H1 (cell line): ENCODE measurements at regions of chr17 and their contacts with region 1.

Region 1: DNA sequence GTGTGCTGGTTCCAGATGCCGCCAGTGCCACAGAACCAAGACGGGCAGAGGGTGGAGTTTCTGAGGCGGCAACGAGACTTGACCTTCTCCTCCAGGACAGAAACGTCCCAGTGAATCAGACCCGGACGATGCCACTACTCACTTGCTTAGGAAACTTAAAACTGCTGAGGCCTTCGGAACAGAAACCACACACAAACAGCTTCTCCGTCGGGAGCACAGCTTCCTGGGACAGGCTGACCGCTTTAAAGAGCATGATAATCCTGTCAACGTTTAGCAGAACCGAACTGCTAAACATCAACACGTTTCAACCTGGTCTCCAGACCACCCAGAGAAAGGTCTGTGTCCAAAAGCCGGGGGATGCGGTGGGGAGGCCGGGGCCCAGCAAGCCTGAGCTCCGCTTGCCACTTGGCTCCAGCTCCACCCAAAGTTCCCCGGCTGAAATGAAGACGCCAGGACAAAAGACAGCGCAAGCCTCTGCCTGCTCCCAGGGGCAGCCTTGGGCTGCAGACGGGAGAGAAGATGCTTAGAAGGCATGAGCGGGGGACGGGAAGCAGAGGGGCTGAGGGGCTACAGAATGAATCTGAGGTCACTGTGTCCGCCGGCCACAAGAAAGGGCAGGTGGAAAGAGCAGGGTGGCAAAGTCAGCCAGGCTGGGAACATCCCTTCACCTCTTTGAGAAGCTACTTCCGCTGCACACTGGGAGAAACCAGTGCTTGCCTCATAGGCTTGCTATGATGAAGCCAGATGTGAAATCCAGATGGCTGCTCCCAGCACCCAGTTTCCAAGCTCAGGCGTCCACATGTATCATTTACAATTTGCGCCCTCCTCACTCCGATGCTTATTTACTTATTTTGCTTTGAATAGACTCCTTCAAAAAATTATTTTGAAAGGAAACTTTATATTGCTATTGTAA is 69.0 kb downstream of the MRM3 start:
- DNase-seq: no peak
- H3K4me3 ChIP-seq: no peak overlapping the region
- H3K27ac ChIP-seq: no peak overlapping the region
- H3K4me1 ChIP-seq: peaks cover 0 to 17% (median 6%) of the 10 kb centered on the region in 4 experiments; a peak in 5 of 7 replicates
- H3K27me3 ChIP-seq: no peaks in the 10 kb centered on the region; a peak in 1 of 7 replicates
- CTCF ChIP-seq: no peak
- EP300 ChIP-seq: no peak
- POLR2A ChIP-seq: no peak
- RAD21 ChIP-seq: no peak

Region 2: DNA sequence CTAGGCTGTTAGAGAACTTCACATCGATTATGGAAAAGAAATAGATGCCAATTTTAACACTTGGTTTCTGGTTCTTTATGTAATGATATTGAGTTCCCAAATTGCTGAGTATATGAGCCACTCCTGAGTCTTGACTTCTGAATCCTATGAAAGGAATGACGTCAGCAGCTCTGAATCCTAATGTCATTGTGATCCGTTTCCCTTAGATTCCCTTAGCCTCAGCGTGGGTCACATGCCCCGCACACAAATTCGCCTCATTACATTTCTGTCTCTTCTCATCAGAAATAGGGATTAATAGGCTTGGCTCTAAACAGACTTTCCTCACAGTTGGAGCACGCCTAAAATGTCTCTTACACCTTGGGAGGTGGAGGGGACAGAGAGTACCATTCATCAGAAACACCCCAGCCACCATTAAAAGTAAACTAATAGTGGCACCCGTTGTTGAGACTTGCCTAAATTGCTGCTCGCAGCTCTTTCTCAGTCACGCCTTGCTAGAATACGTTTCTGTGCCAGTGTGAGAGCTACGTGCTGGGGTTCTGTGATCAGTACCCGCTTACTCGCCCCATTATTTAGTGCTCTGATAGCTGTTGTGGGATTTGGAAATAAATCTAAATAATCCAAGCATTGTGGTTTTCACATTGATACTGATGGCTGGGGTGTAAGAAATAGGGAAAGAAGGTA is 61.8 kb before region 1 on chr17:
- CTCF ChIA-PET with region 1: no interaction called
- POLR2A ChIA-PET with region 1: no interaction called
- DNase-seq: no peak
- H3K4me3 ChIP-seq: no peak overlapping the region
- H3K27ac ChIP-seq: no peak overlapping the region; the same call in 1 of the 2 replicates
- H3K4me1 ChIP-seq: peaks cover 0 to 8% (median 3%) of the 10 kb centered on the region in 4 experiments; a peak in 4 of 7 replicates
- H3K27me3 ChIP-seq: no peaks in the 10 kb centered on the region
- CTCF ChIP-seq: no peak
- EP300 ChIP-seq: no peak
- POLR2A ChIP-seq: no peak; a peak in 1 of 3 replicates
- RAD21 ChIP-seq: no peak

Region 3: DNA sequence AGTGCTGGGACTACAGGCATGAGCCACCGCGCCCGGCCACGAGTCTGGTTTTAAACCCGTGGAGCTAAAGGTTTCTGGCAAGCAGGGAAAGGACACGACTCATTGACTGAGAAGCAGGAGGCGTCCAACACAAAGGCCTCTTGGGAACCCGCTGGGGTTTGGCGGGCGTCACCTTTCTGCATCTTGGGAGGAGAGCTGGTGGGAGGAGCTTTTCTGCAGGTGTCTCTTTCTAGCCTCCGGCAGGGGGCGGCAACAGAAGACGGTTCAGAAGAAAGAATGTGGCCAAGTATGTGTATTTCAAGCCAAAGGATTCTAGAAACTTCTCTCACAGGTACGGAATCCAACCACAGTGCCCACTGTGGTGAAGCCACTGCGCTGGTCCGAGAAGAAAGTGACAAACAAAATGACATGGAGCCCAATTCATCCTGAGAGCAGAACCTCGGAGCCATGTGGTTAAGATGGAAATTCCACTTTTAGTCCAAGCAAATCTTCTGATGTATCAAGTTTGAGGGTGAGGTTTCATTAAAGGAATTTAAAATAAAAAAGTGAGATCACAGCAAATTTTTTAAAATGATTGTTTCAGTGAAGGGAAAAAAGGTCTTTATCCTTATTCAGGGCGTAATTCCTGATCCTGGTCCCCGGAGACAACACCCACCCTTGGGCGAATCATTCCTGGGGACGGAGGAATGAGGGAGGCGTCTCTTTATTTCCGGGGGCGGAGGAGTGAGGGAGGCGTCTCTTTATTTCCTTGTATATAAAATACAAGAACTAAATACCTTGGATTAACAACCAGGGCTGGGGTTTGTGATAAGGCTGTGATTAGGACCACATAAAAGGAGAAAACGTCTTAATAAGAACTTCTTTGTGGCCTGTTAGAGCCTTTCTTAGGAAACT is 28.7 kb after region 1 on chr17:
- CTCF ChIA-PET with region 1: interaction called, 29 read pairs
- POLR2A ChIA-PET with region 1: interaction called, 7 read pairs
- DNase-seq: peak; percentile 87 to 93
- H3K4me3 ChIP-seq: no peak overlapping the region
- H3K27ac ChIP-seq: no peak overlapping the region
- H3K4me1 ChIP-seq: peaks cover 2 to 38% (median 3%) of the 10 kb centered on the region in 4 experiments
- H3K27me3 ChIP-seq: no peaks in the 10 kb centered on the region
- CTCF ChIP-seq: peak; percentile 46 to 74 (median 73)
- EP300 ChIP-seq: 0 out of 3 replicates have a peak, but pooled peaks of 1 of the 2 experiments have one; percentile 32
- POLR2A ChIP-seq: no peak
- RAD21 ChIP-seq: peak; percentile 63 to 75

Region 4: DNA sequence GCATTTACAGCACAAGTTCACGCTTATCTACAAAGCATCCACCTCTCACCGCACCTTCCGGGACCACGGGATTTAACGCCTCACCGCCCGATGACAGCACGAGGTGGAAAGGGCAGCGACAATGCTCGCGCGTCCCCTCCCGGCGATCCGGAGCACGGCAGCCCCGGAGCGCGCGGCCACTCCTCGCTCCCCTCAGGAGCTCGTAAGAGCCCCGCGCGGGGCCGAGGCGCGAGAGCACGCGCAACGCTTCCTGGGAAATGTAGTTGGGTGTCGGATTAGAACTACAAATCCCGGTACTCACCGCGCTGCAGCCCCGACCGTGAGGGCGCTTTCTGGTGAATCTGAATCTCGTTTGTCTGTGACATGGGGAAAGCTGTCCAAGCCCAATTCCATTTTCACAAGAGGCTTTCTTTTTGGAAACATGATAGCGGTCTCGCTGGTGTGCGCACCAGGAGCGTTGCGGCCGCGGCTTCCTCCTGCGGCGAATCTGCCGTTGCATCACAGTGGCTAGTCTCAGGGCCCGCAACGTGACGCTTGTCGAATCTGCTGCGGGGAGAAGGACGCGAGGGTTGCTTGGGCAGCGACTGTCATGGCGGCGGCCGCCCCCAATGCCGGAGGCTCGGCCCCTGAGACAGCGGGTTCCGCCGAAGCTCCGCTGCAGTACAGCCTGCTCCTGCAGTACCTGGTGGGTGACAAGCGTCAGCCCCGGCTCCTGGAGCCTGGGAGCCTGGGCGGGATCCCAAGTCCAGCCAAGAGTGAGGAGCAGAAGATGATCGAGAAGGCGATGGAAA is 145.6 kb after region 1 on chr17 and contains the start of gene TIMM22:
- CTCF ChIA-PET with region 1: interaction called, 12 read pairs
- POLR2A ChIA-PET with region 1: interaction called, 3 read pairs
- DNase-seq: peak; percentile 94 to 97
- H3K4me3 ChIP-seq: peak within 1 kb of the TSS; percentile 86 to 99 (median 94)
- H3K27ac ChIP-seq: peak within 1 kb of the TSS; percentile 92
- H3K4me1 ChIP-seq: peaks cover 0 to 5% (median 0%) of the 10 kb centered on the region in 4 experiments; a peak in 2 of 7 replicates
- H3K27me3 ChIP-seq: no peaks in the 10 kb centered on the region; a peak in 1 of 7 replicates
- CTCF ChIP-seq: peak; percentile 82 to 93 (median 88)
- EP300 ChIP-seq: peak; percentile 38 to 99; a peak in 2 of 3 replicates
- POLR2A ChIP-seq: peak; percentile 79 to 93
- RAD21 ChIP-seq: peak; percentile 91 to 93
- total RNA-seq, gene TIMM22: 17.2 and 17.4 TPM in 2 replicates